Endothelial cell of umbilical vein (primary cell): ENCODE measurements at regions of chr19 and their contacts with region 1.

Region 1: DNA sequence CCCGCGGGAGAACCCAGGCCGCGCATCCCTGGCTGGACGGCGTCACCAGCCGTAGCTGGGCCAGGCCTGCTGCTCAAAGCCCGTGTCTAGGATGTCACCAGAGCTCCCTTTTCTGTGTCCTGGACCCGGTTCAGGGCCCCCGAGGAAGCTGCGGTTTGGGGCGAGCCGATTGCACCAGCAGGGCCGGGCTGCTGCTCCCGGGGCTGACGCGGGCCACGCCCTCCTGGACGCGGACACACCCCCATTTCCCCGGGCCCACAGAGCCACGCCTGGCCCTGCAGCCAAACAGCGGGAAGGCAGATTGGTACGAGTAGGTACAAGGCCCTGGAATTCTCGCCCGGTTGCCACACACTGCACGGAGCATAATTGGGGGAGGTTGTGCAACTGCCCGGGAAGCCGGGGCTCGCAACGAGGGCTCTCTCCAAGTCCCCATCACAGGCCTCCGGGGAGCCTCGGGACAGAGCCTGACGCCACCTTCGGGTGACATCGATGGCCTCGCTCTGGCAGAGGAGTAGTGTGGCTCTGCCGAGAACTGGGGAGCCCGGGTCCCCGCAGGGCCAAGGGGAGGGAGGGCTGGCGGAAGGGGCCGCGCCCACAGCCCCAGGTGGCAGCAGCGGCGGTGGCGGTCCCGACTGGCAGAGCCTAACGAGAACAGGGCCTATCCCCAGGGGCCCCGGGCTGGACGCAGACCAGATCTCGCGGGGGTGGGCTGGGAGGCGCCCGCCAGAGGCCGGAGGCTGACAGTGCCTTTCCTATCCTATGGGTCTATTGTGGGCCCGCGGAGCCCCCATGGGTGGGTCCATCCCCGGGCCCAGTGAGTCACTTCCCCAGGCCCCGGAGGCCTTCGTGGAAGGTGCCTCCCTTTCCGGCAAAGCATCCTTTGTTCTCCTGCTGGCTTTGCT is 23.5 kb downstream of the KCTD15 start:
- DNase-seq: peak; percentile 55
- H3K4me3 ChIP-seq: peak overlapping the region in 2 of 3 experiments; percentile 9 to 26
- H3K27ac ChIP-seq: peak overlapping the region; percentile 69
- H3K4me1 ChIP-seq: peaks cover 26% of the 10 kb centered on the region
- H3K27me3 ChIP-seq: no peaks in the 10 kb centered on the region
- CTCF ChIP-seq: no peak
- POLR2A ChIP-seq: no peak

Region 2: DNA sequence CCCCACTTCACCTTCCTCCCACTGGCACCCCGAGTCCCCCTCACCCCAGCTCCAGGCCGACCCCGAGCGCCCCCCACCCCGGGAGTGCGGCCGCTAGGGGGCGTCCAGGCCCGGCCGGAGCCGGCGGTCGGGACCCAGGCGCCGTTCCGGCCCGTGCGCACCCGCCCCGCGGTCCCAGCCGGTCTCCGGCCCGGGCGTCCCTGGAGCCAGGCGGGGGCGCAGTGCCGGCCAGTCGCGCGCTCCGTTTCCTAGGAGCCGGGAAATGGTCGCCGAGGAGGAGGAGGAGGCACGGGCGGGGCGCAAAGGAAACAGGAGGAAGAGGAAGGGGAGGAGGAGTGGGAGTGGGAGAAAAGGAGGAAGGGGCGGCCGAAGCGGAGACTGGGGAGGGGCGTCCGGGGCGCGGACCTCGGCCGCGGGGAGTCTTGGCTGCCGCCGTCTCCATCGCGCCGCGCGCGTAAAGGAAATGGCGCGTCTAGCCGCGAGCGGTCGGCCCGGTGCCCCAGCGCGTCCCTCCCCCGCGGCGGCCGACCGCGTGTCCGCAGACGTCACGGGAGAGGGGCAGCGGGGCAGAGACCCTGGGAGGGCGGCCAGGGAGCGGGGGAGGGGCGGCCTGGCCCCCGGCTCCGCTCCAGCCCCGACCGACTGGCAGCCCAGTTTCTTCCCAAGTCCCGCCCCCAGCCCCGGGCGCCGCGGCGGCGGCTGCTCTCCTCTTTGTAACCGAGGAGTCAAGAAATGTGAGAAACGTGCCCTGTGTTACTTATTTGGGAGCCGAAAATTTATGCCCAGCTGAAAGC is 24.6 kb before region 1 on chr19:
- CTCF ChIA-PET with region 1: interaction called, 18 read pairs
- POLR2A ChIA-PET with region 1: interaction called, 3 read pairs
- dilution Hi-C with region 1: no loop called
- intact Hi-C with region 1: loop called (anchors 1 kb)
- DNase-seq: peak; percentile 88
- H3K4me3 ChIP-seq: peak overlapping the region; percentile 64 to 86 (median 71)
- H3K27ac ChIP-seq: peak overlapping the region; percentile 83
- H3K4me1 ChIP-seq: peaks cover 17% of the 10 kb centered on the region
- H3K27me3 ChIP-seq: no peaks in the 10 kb centered on the region
- CTCF ChIP-seq: peak; percentile 74 to 85
- POLR2A ChIP-seq: peak; percentile 81

Region 3: GRCh38 chr19:33809957-33810356 is 10.2 kb before region 1 on chr19:
- CTCF ChIA-PET with region 1: interaction called, 4 read pairs
- POLR2A ChIA-PET with region 1: no interaction called
- dilution Hi-C with region 1: no loop called
- intact Hi-C with region 1: loop called (anchors 1 kb)
- DNase-seq: peak; percentile 58
- H3K4me3 ChIP-seq: no peak overlapping the region
- H3K27ac ChIP-seq: no peak overlapping the region
- H3K4me1 ChIP-seq: peaks cover 7% of the 10 kb centered on the region
- H3K27me3 ChIP-seq: no peaks in the 10 kb centered on the region
- CTCF ChIP-seq: no peak
- POLR2A ChIP-seq: no peak

Region 4: DNA sequence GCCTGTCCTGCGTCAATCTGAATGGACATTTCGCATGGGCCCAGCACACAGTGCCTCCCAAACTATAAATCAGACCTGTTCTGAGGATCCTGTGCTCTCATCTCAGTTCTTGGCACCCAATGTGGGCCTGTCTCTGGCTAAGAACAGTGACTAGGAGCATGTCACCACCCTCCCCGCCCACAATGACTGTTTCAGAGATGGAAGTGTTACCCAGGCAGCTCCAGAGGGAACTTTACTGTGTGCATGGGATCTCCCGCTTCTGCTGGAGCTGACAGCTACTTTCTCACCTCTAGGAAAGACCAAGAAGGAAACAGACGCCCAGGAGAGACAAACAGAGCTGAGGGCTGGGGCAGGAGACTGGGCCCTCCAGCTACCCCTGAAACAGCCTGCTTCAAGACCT is 21.6 kb after region 1 on chr19:
- CTCF ChIA-PET with region 1: no interaction called
- POLR2A ChIA-PET with region 1: no interaction called
- dilution Hi-C with region 1: no loop called
- intact Hi-C with region 1: no loop called
- DNase-seq: no peak
- H3K4me3 ChIP-seq: no peak overlapping the region
- H3K27ac ChIP-seq: no peak overlapping the region
- H3K4me1 ChIP-seq: no peaks in the 10 kb centered on the region
- H3K27me3 ChIP-seq: no peaks in the 10 kb centered on the region
- CTCF ChIP-seq: no peak
- POLR2A ChIP-seq: no peak

Region 5: DNA sequence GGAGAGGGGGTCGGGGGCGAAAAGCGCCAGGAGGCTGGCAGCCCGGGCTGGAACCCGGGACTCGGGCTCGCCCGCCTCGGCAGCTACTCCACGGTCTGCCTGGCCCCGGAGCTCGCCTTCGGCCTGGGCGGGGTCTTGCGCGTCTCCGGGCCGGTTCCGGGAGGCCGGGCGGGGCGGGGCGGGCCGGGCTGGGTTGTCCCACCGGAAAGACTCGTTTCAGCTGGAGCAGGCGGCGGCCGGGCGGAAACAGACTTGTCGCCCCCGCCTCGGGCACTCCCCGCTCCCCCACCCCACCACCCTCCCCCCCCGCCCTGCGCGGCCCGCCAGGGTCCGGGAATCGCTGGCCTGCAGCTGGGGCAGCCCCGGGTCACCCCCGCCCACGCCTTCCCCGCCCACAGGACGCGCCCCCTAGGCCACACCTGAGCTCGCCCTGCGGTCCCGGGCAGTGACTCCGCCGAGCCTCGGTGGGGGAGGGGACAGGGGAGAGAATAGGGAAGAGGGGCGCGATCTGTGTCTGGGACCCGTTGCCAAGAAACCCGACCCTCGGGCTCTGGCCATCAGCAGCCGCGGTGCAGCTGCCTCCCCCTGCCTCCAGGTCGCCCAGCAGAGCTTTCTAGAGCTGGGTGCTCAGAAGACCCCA is 85.9 kb after region 1 on chr19:
- CTCF ChIA-PET with region 1: interaction called, 5 read pairs
- POLR2A ChIA-PET with region 1: no interaction called
- dilution Hi-C with region 1: no loop called
- intact Hi-C with region 1: loop called (anchors 1 kb)
- DNase-seq: peak; percentile 22
- H3K4me3 ChIP-seq: peak overlapping the region in 2 of 3 experiments; percentile 2 to 24
- H3K27ac ChIP-seq: peak overlapping the region; percentile 83
- H3K4me1 ChIP-seq: peaks cover 20% of the 10 kb centered on the region
- H3K27me3 ChIP-seq: peaks cover 0 to 2% of the 10 kb centered on the region in 2 experiments
- CTCF ChIP-seq: no peak
- POLR2A ChIP-seq: no peak

Region 6: GRCh38 chr19:33998739-33999345 is 178.7 kb after region 1 on chr19:
- CTCF ChIA-PET with region 1: interaction called, 6 read pairs
- POLR2A ChIA-PET with region 1: no interaction called
- dilution Hi-C with region 1: no loop called
- intact Hi-C with region 1: loop called (anchors 1 kb)
- DNase-seq: peak; percentile 21
- H3K4me3 ChIP-seq: no peak overlapping the region
- H3K27ac ChIP-seq: no peak overlapping the region
- H3K4me1 ChIP-seq: no peaks in the 10 kb centered on the region
- H3K27me3 ChIP-seq: peaks cover 3 to 6% of the 10 kb centered on the region in 2 experiments
- CTCF ChIP-seq: peak; percentile 11 to 17
- POLR2A ChIP-seq: no peak